ENCODE measurements at regions of chr11 and their contacts with region 1.

Region 1: DNA sequence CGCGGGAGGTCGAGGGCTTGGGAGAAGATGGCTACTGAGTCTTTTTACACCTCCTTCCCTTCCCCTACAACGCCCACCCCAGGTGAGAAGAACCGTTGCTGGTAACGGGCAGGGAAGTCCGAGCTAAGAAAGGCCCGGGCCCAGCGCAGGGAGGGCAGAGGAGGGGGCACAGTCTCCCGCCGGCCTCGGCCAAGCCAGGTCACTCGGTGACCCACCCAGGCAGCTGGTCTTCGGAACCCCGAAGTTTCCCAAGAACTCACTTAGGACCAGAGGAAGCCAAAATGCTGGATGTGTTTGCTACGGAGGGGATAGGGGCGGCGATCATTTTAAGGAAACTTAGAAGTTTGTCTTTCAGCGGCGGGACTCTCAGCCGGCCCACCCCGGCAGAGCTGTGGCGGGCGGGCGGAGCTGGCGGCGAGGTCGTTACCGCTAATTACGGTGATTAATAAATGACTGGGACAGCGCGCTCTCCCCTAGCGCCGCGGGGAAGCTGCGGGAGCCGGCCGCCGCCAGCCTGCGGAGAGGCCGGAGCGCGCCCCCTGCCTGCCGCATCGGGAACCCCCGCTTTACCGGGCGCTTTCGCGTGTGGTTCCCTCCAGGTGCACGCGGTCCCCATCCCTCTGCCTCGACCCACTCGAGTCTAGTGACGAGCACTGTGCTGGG is 820 bp downstream of the ROBO3 start:
- DNase-seq: peak; percentile 45
- H3K4me3 ChIP-seq: no peak overlapping the region
- H3K27ac ChIP-seq: no peak overlapping the region
- H3K4me1 ChIP-seq: peaks cover 9% of the 10 kb centered on the region
- H3K27me3 ChIP-seq: peaks cover 89 to 92% of the 10 kb centered on the region in 2 experiments
- CTCF ChIP-seq: peak; percentile 82 to 90
- POLR2A ChIP-seq: no peak

Region 2: DNA sequence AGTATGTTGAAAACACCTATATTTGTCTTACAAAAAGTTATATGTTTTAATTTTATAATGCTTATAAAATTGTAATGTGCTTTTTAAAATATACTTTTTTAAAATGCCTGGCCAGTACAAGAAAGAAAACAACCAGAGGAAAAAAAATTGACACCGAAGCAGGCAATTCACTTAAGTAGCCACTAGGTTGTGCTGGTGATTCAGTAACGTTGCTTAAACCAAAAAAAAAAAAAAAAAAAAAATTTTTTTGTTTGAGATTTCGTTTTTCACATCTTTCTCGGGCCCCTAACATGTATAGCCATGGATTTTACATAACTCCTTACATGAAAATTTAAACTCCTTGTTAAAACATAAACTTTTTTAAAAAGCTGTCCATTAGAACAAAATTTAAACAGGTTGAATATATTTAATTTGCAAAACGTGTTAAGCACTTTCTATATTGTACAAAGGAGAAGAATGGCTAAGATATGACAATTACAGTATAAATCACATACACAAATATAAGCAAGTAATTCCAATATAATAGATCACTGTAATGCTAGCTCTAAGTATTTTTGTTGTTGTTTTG is 450.6 kb before region 1 on chr11:
- CTCF ChIA-PET with region 1: interaction called, 10 read pairs
- POLR2A ChIA-PET with region 1: no interaction called
- dilution Hi-C with region 1: no loop called
- intact Hi-C with region 1: loop called (anchors 1 kb)
- DNase-seq: peak; percentile 42
- H3K4me3 ChIP-seq: no peak overlapping the region
- H3K27ac ChIP-seq: no peak overlapping the region
- H3K4me1 ChIP-seq: no peaks in the 10 kb centered on the region
- H3K27me3 ChIP-seq: peaks cover 17 to 20% of the 10 kb centered on the region in 2 experiments
- CTCF ChIP-seq: peak; percentile 6 to 48
- POLR2A ChIP-seq: no peak

Region 3: GRCh38 chr11:124656774-124657630 is 209.1 kb before region 1 on chr11:
- CTCF ChIA-PET with region 1: interaction called, 12 read pairs
- POLR2A ChIA-PET with region 1: no interaction called
- dilution Hi-C with region 1: no loop called
- intact Hi-C with region 1: no loop called
- DNase-seq: no peak
- H3K4me3 ChIP-seq: no peak overlapping the region
- H3K27ac ChIP-seq: no peak overlapping the region
- H3K4me1 ChIP-seq: no peaks in the 10 kb centered on the region
- H3K27me3 ChIP-seq: no peaks in the 10 kb centered on the region
- CTCF ChIP-seq: no peak
- POLR2A ChIP-seq: no peak

Region 4: DNA sequence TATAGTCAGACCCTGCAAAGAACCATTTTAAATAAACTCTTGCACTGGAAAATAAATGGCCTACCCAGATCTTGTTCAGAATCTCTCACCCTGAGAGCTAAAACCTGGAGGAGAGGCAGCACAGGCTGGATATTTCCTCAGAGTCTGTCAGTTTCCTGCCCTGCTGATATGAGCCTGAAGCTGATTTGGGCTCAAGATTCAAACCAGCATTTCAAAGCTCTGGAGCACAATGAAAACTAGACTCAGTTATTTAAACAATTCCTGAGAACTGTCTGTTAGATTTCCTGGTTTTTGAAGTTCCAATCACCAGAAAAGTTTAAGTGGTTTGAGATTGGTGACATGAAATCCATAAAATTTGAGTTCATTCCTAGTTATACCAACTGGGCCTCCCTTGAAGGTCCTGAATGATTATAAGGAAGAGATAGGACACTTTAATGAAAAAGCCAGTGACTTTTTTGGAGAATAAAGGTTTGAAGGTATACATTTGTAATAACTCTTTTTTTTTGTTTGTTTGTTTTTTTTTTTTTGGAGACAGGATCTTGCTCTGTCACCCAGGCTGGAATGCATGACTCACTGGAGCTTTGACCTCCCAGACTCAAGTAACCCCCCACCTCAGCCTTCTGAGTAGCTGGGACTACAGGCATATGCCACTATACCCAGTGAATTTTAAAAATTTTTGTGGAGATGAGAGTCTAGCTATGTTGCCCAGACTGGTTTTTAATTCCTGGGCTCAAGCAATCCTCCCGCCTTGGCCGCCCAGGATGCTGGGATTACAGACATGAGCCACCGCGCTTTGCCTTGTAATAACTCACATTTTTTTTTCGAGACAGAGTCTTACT is 96.0 kb before region 1 on chr11:
- CTCF ChIA-PET with region 1: interaction called, 11 read pairs
- POLR2A ChIA-PET with region 1: no interaction called
- dilution Hi-C with region 1: no loop called
- intact Hi-C with region 1: no loop called
- DNase-seq: peak; percentile 72
- H3K4me3 ChIP-seq: no peak overlapping the region
- H3K27ac ChIP-seq: peak overlapping the region; percentile 86
- H3K4me1 ChIP-seq: peaks cover 34% of the 10 kb centered on the region
- H3K27me3 ChIP-seq: no peaks in the 10 kb centered on the region
- CTCF ChIP-seq: no peak
- POLR2A ChIP-seq: peak; percentile 41

Region 5: GRCh38 chr11:124800226-124800929 is 65.7 kb before region 1 on chr11 and contains the start of gene MSANTD2:
- CTCF ChIA-PET with region 1: interaction called, 8 read pairs
- POLR2A ChIA-PET with region 1: no interaction called
- dilution Hi-C with region 1: no loop called
- intact Hi-C with region 1: loop called (anchors 2 kb)
- DNase-seq: peak; percentile 82
- H3K4me3 ChIP-seq: peak within 1 kb of the TSS; percentile 59 to 98 (median 62)
- H3K27ac ChIP-seq: peak within 1 kb of the TSS; percentile 81
- H3K4me1 ChIP-seq: peaks cover 20% of the 10 kb centered on the region
- H3K27me3 ChIP-seq: no peaks in the 10 kb centered on the region
- CTCF ChIP-seq: no peak
- POLR2A ChIP-seq: peak; percentile 81
- total RNA-seq, gene MSANTD2: 17.0 and 23.2 TPM in 2 replicates

Region 6: GRCh38 chr11:124875943-124876817 is 10.1 kb after region 1 on chr11:
- CTCF ChIA-PET with region 1: interaction called, 53 read pairs
- POLR2A ChIA-PET with region 1: interaction called, 3 read pairs
- dilution Hi-C with region 1: no loop called
- intact Hi-C with region 1: no loop called
- DNase-seq: peak; percentile 97
- H3K4me3 ChIP-seq: peak overlapping the region; percentile 14 to 49 (median 47)
- H3K27ac ChIP-seq: peak overlapping the region; percentile 65
- H3K4me1 ChIP-seq: peaks cover 21% of the 10 kb centered on the region
- H3K27me3 ChIP-seq: peaks cover 21 to 26% of the 10 kb centered on the region in 2 experiments
- CTCF ChIP-seq: peak; percentile 63 to 74
- POLR2A ChIP-seq: no peak

Region 7: GRCh38 chr11:125345421-125346178 is 479.5 kb after region 1 on chr11:
- CTCF ChIA-PET with region 1: no interaction called
- POLR2A ChIA-PET with region 1: no interaction called
- dilution Hi-C with region 1: no loop called
- intact Hi-C with region 1: no loop called
- DNase-seq: peak; percentile 67
- H3K4me3 ChIP-seq: no peak overlapping the region
- H3K27ac ChIP-seq: no peak overlapping the region
- H3K4me1 ChIP-seq: no peaks in the 10 kb centered on the region
- H3K27me3 ChIP-seq: no peaks in the 10 kb centered on the region
- CTCF ChIP-seq: peak; percentile 84 to 90
- POLR2A ChIP-seq: no peak

Measured in endothelial cell of umbilical vein (primary cell).